Endothelial cell of umbilical vein (primary cell): ENCODE measurements at regions of chr4 and their contacts with region 1.

Region 1: GRCh38 chr4:138242076-138242833 is at the start of gene SLC7A11:
- DNase-seq: peak; percentile 96
- H3K4me3 ChIP-seq: peak within 1 kb of the TSS; percentile 48 to 99 (median 96)
- H3K27ac ChIP-seq: peak within 1 kb of the TSS; percentile 96
- H3K4me1 ChIP-seq: peaks cover 20% of the 10 kb centered on the region
- H3K27me3 ChIP-seq: no peaks in the 10 kb centered on the region
- CTCF ChIP-seq: no peak
- POLR2A ChIP-seq: peak; percentile 87
- total RNA-seq, gene SLC7A11: 79.3 and 82.7 TPM in 2 replicates

Region 2: DNA sequence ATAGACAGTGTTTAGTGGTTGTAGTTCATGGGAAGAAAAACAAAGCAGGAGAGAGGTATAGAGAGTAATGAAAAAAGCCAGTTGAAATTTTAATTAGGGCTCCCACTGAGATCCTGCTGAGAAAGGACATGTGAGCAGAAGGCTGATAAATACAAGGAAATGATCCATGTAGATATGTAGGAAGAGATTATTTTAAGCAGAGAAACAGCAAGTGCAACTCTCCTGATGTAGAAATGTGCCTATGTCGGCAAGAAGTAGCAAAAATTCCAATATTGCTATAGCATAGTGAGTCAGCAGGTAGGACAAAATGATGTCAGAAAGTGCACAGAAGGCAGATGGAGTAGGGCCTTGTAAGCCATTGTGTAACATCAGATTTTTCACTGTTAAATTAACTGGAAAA is 1737.2 kb before region 1 on chr4:
- CTCF ChIA-PET with region 1: no interaction called
- POLR2A ChIA-PET with region 1: no interaction called
- dilution Hi-C with region 1: no loop called
- intact Hi-C with region 1: no loop called
- DNase-seq: no peak
- H3K4me3 ChIP-seq: no peak overlapping the region
- H3K27ac ChIP-seq: no peak overlapping the region
- H3K4me1 ChIP-seq: no peaks in the 10 kb centered on the region
- H3K27me3 ChIP-seq: no peaks in the 10 kb centered on the region
- CTCF ChIP-seq: no peak
- POLR2A ChIP-seq: no peak

Region 3: DNA sequence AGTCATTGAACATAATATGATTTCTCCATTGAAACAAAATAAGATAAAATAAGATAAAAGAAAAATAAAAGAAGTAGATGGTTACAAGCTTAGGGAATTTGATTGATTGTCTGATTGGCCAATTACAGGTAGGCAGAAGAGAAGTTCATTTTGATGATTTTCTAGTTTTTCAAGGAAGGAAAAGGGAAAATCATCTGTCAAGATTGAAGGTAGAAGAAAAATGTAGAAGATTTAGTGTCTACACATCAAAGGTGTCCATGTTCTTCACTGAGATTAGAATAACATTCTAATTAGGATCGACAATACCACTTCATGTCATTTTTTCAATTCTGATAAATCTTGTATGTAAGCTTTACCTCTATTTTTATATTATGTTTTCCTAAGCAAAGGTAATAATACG is 1199.1 kb before region 1 on chr4:
- CTCF ChIA-PET with region 1: no interaction called
- POLR2A ChIA-PET with region 1: no interaction called
- dilution Hi-C with region 1: no loop called
- intact Hi-C with region 1: no loop called
- DNase-seq: no peak
- H3K4me3 ChIP-seq: no peak overlapping the region
- H3K27ac ChIP-seq: no peak overlapping the region
- H3K4me1 ChIP-seq: no peaks in the 10 kb centered on the region
- H3K27me3 ChIP-seq: no peaks in the 10 kb centered on the region
- CTCF ChIP-seq: no peak
- POLR2A ChIP-seq: no peak

Region 4: GRCh38 chr4:138174981-138175794 is 67.1 kb before region 1 on chr4:
- CTCF ChIA-PET with region 1: no interaction called
- POLR2A ChIA-PET with region 1: no interaction called
- dilution Hi-C with region 1: no loop called
- intact Hi-C with region 1: loop called (anchors 2 kb)
- DNase-seq: peak; percentile 55
- H3K4me3 ChIP-seq: no peak overlapping the region
- H3K27ac ChIP-seq: no peak overlapping the region
- H3K4me1 ChIP-seq: peaks cover 10% of the 10 kb centered on the region
- H3K27me3 ChIP-seq: no peaks in the 10 kb centered on the region
- CTCF ChIP-seq: no peak
- POLR2A ChIP-seq: no peak

Region 5: GRCh38 chr4:138230048-138230447 is 12.2 kb before region 1 on chr4:
- CTCF ChIA-PET with region 1: interaction called, 5 read pairs
- POLR2A ChIA-PET with region 1: interaction called, 29 read pairs
- dilution Hi-C with region 1: no loop called
- intact Hi-C with region 1: no loop called
- DNase-seq: no peak
- H3K4me3 ChIP-seq: no peak overlapping the region
- H3K27ac ChIP-seq: no peak overlapping the region
- H3K4me1 ChIP-seq: peaks cover 63% of the 10 kb centered on the region
- H3K27me3 ChIP-seq: no peaks in the 10 kb centered on the region
- CTCF ChIP-seq: no peak
- POLR2A ChIP-seq: no peak

Region 6: DNA sequence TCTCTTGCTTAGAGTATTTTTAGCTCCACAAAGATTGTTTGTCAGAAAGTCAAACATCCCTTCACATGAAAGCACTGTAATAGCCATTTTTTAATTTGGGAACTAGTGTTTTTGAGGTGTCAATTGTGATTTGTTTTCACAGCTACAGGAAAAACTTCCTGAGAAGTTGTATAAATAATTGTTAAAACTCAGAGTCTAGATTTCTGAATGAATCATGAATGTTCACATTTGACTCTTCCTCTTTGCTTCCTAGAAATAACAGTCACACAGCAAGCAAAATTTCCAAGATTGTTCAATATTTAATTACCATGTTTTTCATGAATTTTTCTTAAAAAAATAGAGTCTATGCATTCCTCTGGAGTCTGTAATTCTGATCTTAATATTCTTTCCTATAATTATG is 156.8 kb after region 1 on chr4:
- CTCF ChIA-PET with region 1: no interaction called
- POLR2A ChIA-PET with region 1: no interaction called
- dilution Hi-C with region 1: no loop called
- intact Hi-C with region 1: loop called (anchors 1 kb)
- DNase-seq: peak; percentile 74
- H3K4me3 ChIP-seq: no peak overlapping the region
- H3K27ac ChIP-seq: peak overlapping the region; percentile 30
- H3K4me1 ChIP-seq: peaks cover 18% of the 10 kb centered on the region
- H3K27me3 ChIP-seq: no peaks in the 10 kb centered on the region
- CTCF ChIP-seq: no peak
- POLR2A ChIP-seq: no peak

Region 7: DNA sequence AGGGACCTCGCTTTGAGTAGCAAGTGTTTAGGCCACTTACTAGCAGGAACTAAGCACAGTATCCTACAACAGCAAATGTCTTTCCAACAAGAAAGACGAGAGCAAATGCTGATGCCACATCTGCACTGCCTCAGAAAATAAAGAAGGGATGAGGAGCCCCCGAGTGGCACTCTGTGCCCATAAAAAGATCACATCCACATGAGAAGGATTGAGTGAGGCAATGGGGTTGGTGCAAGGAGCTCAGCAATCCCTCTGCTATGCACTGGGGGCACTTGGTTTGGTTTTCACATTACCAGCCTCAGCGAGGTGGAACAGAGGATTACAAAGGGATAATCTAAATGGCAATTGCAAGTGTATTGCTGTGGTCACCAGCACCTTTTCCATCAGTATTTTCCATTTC is 252.7 kb after region 1 on chr4:
- CTCF ChIA-PET with region 1: interaction called, 9 read pairs
- POLR2A ChIA-PET with region 1: no interaction called
- dilution Hi-C with region 1: no loop called
- intact Hi-C with region 1: loop called (anchors 1 kb)
- DNase-seq: peak; percentile 55
- H3K4me3 ChIP-seq: no peak overlapping the region
- H3K27ac ChIP-seq: no peak overlapping the region
- H3K4me1 ChIP-seq: no peaks in the 10 kb centered on the region
- H3K27me3 ChIP-seq: no peaks in the 10 kb centered on the region
- CTCF ChIP-seq: peak; percentile 38 to 39
- POLR2A ChIP-seq: no peak

Region 8: DNA sequence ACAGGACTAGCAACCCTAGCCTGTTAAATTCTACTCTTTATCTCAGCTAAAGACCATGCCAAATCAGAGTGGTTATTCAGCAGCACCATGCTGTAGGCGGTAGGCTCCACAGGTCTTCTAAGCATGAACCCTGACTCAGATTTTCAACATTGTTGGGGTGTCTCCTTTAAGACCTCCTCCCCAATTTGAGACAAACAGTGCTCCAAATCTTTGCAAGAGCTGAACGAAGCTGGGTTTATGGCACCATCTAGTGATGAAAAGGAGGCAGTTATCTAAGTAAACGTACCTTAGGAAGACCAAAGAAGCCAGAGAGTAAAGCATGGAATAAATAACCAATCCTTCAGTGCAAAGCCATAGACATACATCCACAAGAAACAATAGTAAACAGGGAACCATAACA is 334.4 kb after region 1 on chr4:
- CTCF ChIA-PET with region 1: no interaction called
- POLR2A ChIA-PET with region 1: no interaction called
- dilution Hi-C with region 1: no loop called
- intact Hi-C with region 1: loop called (anchors 2 kb)
- DNase-seq: peak; percentile 57
- H3K4me3 ChIP-seq: no peak overlapping the region
- H3K27ac ChIP-seq: no peak overlapping the region
- H3K4me1 ChIP-seq: no peaks in the 10 kb centered on the region
- H3K27me3 ChIP-seq: peaks cover under 1 to 3% of the 10 kb centered on the region in 2 experiments
- CTCF ChIP-seq: peak; percentile 31 to 53
- POLR2A ChIP-seq: no peak

Region 9: GRCh38 chr4:138910607-138911336 is 668.5 kb after region 1 on chr4:
- CTCF ChIA-PET with region 1: no interaction called
- POLR2A ChIA-PET with region 1: no interaction called
- dilution Hi-C with region 1: no loop called
- intact Hi-C with region 1: loop called (anchors 1 kb)
- DNase-seq: peak; percentile 99
- H3K4me3 ChIP-seq: peak overlapping the region in 1 of 3 experiments; percentile 36
- H3K27ac ChIP-seq: peak overlapping the region; percentile 97
- H3K4me1 ChIP-seq: peaks cover 16% of the 10 kb centered on the region
- H3K27me3 ChIP-seq: no peaks in the 10 kb centered on the region
- CTCF ChIP-seq: no peak
- POLR2A ChIP-seq: no peak